ENCODE measurements at regions of chr6 and their contacts with region 1.

Region 1: DNA sequence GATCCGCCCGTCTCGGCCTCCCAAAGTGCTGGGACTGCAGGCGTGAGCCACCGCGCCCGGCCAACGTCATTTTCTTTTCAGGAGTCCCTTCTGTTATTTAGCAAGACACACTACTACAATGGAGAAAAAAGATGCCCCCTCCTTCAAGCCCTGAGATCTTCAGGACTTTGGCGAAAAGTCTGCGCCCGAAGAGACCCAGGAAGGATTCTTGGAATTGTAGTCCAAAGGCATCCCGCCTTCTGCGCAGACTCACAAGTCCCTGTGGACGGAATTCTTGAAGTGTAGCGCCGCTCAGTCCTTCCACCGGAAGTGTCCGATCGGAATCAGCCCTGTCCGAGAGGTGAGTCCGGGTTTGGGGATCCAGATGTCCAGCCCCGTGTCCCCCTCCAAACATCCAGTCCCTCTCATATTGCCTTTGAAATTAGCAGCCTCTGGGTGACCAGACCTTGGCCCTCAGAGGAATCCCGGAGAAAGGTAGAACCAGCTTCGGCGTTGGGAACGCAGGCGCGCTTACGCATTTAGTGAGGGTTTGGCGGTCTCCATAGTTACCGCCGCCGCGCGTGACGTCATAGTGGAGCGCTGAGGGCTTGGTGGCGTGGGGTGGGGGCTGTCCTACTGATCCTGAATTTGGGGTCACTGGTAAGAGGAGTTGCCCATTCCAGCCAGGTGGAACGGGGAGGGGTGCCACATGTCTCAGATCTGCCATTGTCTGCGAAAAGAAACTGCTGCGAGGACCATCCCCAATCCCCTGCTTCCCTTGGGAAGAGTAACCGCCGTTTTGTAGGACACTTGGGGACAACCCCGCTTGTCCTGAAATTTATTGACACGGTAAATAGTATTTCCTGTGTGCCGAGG is 490 bp downstream of the ZNF165 start:
- DNase-seq: peak; percentile 97
- H3K4me3 Mint-ChIP-seq: peak overlapping the region; percentile 97
- H3K27ac Mint-ChIP-seq: peak overlapping the region; percentile 94
- H3K4me1 Mint-ChIP-seq: peaks cover 14% of the 10 kb centered on the region
- H3K27me3 Mint-ChIP-seq: no peaks in the 10 kb centered on the region

Region 2: GRCh38 chr6:27940766-27941165 is 140.1 kb before region 1 on chr6:
- intact Hi-C with region 1: no loop called
- DNase-seq: no peak
- H3K4me3 Mint-ChIP-seq: no peak overlapping the region
- H3K27ac Mint-ChIP-seq: no peak overlapping the region
- H3K4me1 Mint-ChIP-seq: no peaks in the 10 kb centered on the region
- H3K27me3 Mint-ChIP-seq: peaks cover 20% of the 10 kb centered on the region

Region 3: GRCh38 chr6:28104392-28105244 is 23.8 kb after region 1 on chr6:
- intact Hi-C with region 1: loop called (anchors 1 kb)
- DNase-seq: peak; percentile 94
- H3K4me3 Mint-ChIP-seq: peak overlapping the region; percentile 87
- H3K27ac Mint-ChIP-seq: peak overlapping the region; percentile 79
- H3K4me1 Mint-ChIP-seq: peaks cover 8% of the 10 kb centered on the region
- H3K27me3 Mint-ChIP-seq: peaks cover 18% of the 10 kb centered on the region

Region 4: GRCh38 chr6:28349892-28350737 is 269.3 kb after region 1 on chr6 and contains the start of gene ZKSCAN3:
- intact Hi-C with region 1: loop called (anchors 5 kb)
- DNase-seq: peak; percentile 96
- H3K4me3 Mint-ChIP-seq: peak within 1 kb of the TSS; percentile 98
- H3K27ac Mint-ChIP-seq: peak within 1 kb of the TSS; percentile 91
- H3K4me1 Mint-ChIP-seq: peaks cover 22% of the 10 kb centered on the region
- H3K27me3 Mint-ChIP-seq: peaks cover 22% of the 10 kb centered on the region
- total RNA-seq, gene ZKSCAN3: 2.7 and 2.9 TPM in 2 replicates